PC-3 (cell line): ENCODE measurements at regions of chr11 and their contacts with region 1.

Region 1: GRCh38 chr11:109946322-109946846 is 146.8 kb upstream of the ZC3H12C start:
- DNase-seq: peak; percentile 98
- ATAC-seq: peak; percentile 95
- H3K4me3 ChIP-seq: peak overlapping the region; percentile 53; the same call in 1 of the 2 replicates
- H3K27ac ChIP-seq: peak overlapping the region; percentile 80
- H3K4me1 ChIP-seq: peaks cover 20% of the 10 kb centered on the region
- H3K27me3 ChIP-seq: no peaks in the 10 kb centered on the region
- CTCF ChIP-seq: peak; percentile 99

Region 2: DNA sequence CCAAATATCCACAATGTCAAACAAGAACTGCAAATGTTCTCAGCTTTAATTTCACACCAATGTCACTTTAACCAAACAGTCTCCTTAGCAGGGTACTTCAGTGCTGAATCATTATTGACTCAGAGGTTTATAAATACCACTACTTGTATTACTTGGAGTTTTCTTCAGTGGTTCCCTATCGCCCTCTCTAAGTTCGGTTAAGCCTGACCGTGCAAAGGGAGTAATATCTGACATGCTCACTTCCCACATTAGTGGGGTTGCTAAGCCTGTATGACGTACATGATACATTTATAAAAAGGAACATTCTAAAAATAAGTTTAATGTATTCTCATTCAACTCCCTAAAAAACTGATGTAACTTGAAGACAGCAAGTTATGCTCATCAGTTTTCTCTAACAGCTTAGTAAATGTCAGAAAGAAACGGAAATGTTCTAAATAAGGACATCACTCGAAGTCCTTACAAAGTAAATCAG is 53.7 kb after region 1 on chr11:
- CTCF ChIA-PET with region 1: no interaction called
- POLR2A ChIA-PET with region 1: no interaction called
- intact Hi-C with region 1: loop called (anchors 1 kb)
- DNase-seq: peak; percentile 93
- ATAC-seq: peak; percentile 99
- H3K4me3 ChIP-seq: no peak overlapping the region
- H3K27ac ChIP-seq: peak overlapping the region; percentile 86
- H3K4me1 ChIP-seq: peaks cover 33% of the 10 kb centered on the region
- H3K27me3 ChIP-seq: no peaks in the 10 kb centered on the region
- CTCF ChIP-seq: no peak

Region 3: GRCh38 chr11:110077831-110078325 is 131.5 kb after region 1 on chr11:
- CTCF ChIA-PET with region 1: interaction called, 3 read pairs
- POLR2A ChIA-PET with region 1: no interaction called
- intact Hi-C with region 1: loop called (anchors 1 kb)
- DNase-seq: peak; percentile 92
- ATAC-seq: peak; percentile 54
- H3K4me3 ChIP-seq: peak overlapping the region; percentile 27; the same call in 1 of the 2 replicates
- H3K27ac ChIP-seq: peak overlapping the region; percentile 95
- H3K4me1 ChIP-seq: peaks cover 34% of the 10 kb centered on the region
- H3K27me3 ChIP-seq: no peaks in the 10 kb centered on the region
- CTCF ChIP-seq: no peak

Region 4: DNA sequence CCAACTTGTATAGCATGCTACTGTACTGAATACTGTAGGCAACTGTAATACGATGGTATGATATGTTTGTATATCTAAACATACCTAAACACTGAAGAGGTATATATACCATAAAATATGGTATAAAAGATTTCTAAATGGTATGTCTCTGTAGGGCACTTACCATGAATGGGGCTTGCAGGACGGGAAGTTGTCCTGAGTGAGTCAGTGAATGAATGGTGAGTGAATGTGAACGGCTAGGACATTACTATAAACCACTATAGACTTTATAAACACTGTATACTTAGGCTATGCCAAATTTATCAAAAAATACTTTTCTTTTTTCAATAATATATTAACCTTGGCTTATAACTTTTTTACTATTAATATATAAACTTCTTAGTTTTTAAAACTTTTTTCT is 213.6 kb after region 1 on chr11:
- CTCF ChIA-PET with region 1: no interaction called
- POLR2A ChIA-PET with region 1: no interaction called
- intact Hi-C with region 1: loop called (anchors 5 kb)
- DNase-seq: peak; percentile 37
- ATAC-seq: peak; percentile 80
- H3K4me3 ChIP-seq: no peak overlapping the region
- H3K27ac ChIP-seq: 0 out of 2 replicates have a peak overlapping the region, but pooled peaks have one; percentile 0
- H3K4me1 ChIP-seq: no peaks in the 10 kb centered on the region
- H3K27me3 ChIP-seq: no peaks in the 10 kb centered on the region
- CTCF ChIP-seq: no peak

Region 5: DNA sequence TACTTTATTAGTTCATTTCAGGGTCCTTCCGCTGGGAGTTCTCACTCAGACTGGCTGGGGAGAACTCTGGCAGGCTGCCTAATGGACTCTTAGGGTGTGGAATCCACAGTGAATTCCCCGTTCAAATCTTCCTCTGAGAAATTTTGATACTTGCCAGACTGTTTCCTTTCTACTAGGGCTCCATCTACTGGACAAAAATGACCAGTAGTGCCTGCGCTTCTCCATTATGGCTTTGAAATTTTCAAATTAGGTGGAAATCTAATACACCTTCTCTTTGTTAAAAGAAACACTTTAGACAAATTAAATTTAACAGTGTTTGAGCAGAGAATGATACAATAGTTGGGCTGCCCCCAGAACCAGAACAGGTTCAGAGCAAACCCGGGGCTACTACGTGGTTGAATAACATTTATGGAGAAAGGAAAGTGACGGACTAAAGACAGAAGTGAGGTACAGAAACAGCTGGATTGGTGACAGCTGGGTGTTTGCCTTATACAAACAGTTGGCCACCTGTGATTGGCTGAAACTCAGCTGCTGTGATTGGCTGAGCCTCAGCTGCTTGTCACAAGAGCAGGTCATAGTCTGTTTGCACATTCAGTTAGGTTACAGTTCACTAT is 430.4 kb after region 1 on chr11:
- CTCF ChIA-PET with region 1: no interaction called
- POLR2A ChIA-PET with region 1: no interaction called
- intact Hi-C with region 1: loop called (anchors 1 kb)
- DNase-seq: peak; percentile 91
- ATAC-seq: peak; percentile 84
- H3K4me3 ChIP-seq: peak overlapping the region; percentile 65
- H3K27ac ChIP-seq: 0 out of 2 replicates have a peak overlapping the region, but pooled peaks have one; percentile 9
- H3K4me1 ChIP-seq: peaks cover 21% of the 10 kb centered on the region
- H3K27me3 ChIP-seq: no peaks in the 10 kb centered on the region
- CTCF ChIP-seq: peak; percentile 98